ENCODE measurements at regions of chr6 and their contacts with region 1.

Region 1: DNA sequence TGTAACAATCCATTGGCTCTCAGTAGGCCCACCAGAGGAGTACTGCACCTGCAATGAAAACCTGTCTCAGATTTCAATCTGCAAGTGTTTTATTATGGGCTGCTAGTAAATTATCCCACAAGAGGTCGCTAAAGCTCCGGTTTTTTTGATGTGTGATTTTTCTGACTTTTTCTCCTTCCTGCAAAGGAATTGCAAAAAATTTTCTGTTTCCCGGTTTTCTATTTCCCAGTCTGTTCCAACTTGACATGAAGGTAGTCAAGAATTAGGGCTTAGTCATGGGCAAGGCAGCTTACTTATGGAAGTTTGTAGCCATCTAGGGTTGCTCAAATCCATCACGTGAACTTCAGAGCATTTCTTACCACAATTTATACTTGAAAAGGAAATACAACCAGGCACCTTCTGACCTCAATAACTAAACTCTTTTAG is 38.5 kb upstream of the AHI1 start:
- DNase-seq: no peak
- H3K4me3 ChIP-seq: no peak overlapping the region
- H3K27ac ChIP-seq: no peak overlapping the region
- H3K4me1 ChIP-seq: peaks cover 0 to 6% (median 4%) of the 10 kb centered on the region in 4 experiments; a peak in 4 of 7 replicates
- H3K27me3 ChIP-seq: no peaks in the 10 kb centered on the region
- CTCF ChIP-seq: peak in 2 of 3 experiments; percentile 57 to 61; a peak in 2 of 4 replicates
- EP300 ChIP-seq: no peak
- POLR2A ChIP-seq: no peak
- RAD21 ChIP-seq: peak; percentile 77 to 81

Region 2: DNA sequence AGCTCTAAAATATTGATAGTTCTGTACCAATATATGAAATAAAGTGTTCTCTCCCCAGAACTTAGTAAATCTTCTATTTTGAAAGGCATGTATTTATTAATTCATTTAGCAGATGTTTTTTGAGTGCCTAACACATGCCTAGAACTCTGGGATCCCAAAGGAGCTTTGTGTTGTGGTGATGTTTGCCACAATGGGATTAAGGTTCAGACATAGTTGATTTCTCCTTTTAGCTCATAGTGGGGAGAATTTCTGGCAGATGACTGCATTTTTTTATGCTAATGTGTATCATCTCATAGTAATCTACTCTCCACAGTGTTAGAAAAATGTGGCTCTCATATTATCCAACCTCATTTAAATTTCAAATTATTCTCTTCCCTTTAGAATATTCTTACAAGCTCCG is 333.2 kb before region 1 on chr6:
- CTCF ChIA-PET with region 1: no interaction called
- POLR2A ChIA-PET with region 1: no interaction called
- DNase-seq: no peak
- H3K4me3 ChIP-seq: no peak overlapping the region
- H3K27ac ChIP-seq: no peak overlapping the region
- H3K4me1 ChIP-seq: no peaks in the 10 kb centered on the region
- H3K27me3 ChIP-seq: no peaks in the 10 kb centered on the region
- CTCF ChIP-seq: no peak
- EP300 ChIP-seq: no peak
- POLR2A ChIP-seq: no peak
- RAD21 ChIP-seq: no peak

Region 3: DNA sequence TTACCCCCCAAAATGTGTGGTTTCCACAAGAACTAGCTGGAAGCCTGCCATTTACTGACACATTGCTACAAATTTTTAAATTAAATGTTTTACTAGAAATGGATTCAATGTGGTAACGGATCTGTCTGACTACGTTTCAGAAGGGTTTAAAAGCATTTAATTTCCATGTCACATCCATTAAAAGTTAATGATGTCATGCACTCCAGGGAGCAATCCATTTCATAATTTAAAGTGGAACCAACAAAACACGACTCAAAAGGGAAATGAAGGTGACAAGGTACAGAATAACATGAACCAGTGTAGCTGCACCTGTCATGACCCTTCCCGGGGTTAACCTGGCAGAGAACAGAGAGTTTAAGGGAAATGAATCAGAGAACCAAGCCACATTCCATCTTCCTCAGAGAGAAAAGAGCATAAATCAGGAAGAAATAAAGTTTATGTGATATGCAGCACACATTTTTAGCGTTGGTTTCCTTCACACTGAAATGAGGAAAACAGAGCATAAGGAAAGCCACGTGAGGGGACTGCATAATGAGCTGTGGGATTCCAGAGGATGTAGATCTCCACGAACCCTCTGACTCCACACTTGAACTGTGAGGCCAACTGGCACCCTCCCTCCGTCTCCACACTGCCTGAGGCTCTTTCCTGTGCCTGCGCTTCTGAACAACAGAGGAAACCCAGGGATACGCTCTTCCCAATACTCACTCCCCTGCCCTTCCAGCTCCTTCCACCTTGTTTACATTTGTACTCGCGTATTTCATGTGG is 131.9 kb after region 1 on chr6:
- CTCF ChIA-PET with region 1: interaction called, 20 read pairs
- POLR2A ChIA-PET with region 1: no interaction called
- DNase-seq: no peak
- H3K4me3 ChIP-seq: no peak overlapping the region
- H3K27ac ChIP-seq: peak overlapping the region; percentile 45; the same call in 1 of the 2 replicates
- H3K4me1 ChIP-seq: no peaks in the 10 kb centered on the region; a peak in 1 of 7 replicates
- H3K27me3 ChIP-seq: no peaks in the 10 kb centered on the region; a peak in 1 of 7 replicates
- CTCF ChIP-seq: no peak
- EP300 ChIP-seq: no peak
- POLR2A ChIP-seq: no peak
- RAD21 ChIP-seq: no peak

Region 4: GRCh38 chr6:135675862-135676261 is 139.9 kb after region 1 on chr6:
- CTCF ChIA-PET with region 1: interaction called, 20 read pairs
- POLR2A ChIA-PET with region 1: no interaction called
- DNase-seq: no peak
- H3K4me3 ChIP-seq: no peak overlapping the region
- H3K27ac ChIP-seq: no peak overlapping the region
- H3K4me1 ChIP-seq: no peaks in the 10 kb centered on the region
- H3K27me3 ChIP-seq: no peaks in the 10 kb centered on the region
- CTCF ChIP-seq: peak in 2 of 3 experiments; percentile 62 to 85; a peak in 3 of 4 replicates
- EP300 ChIP-seq: no peak
- POLR2A ChIP-seq: no peak
- RAD21 ChIP-seq: peak; percentile 94 to 98

Measured in H1 (cell line).